Left ventricle myocardium superior (tissue), 1 donor: ENCODE measurements at regions of chr20 and their contacts with region 1.

Region 1: DNA sequence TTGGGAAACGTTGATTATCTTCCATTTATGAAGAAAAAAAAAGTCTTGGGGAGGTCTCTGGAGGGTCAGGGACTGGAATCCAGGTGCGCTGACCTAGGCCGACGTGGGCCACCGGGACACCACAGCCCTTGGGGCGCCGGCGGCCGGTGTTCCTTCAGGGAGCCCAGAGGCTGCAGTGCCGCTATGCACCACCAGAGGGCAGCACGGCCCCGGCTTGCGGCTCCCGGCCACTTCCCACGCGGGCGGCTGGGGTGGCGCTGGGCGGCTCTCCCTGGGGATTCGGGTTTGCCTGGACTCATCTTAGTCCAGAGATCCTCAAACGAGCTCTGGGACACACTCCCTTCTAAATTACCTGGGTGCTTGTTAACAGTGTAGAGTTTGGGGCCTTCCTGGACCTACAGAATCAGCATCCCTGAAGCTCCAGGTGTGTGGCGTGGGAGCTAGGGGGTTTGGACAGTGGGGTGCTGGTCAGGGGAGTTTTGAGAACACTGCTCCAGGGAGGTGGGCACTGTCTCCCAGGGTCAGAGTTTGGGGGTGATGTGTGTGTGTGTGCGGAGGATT is 23.0 kb upstream of the GTSF1L start:
- DNase-seq: peak; percentile 87
- ATAC-seq: peak; percentile 90

Region 2: DNA sequence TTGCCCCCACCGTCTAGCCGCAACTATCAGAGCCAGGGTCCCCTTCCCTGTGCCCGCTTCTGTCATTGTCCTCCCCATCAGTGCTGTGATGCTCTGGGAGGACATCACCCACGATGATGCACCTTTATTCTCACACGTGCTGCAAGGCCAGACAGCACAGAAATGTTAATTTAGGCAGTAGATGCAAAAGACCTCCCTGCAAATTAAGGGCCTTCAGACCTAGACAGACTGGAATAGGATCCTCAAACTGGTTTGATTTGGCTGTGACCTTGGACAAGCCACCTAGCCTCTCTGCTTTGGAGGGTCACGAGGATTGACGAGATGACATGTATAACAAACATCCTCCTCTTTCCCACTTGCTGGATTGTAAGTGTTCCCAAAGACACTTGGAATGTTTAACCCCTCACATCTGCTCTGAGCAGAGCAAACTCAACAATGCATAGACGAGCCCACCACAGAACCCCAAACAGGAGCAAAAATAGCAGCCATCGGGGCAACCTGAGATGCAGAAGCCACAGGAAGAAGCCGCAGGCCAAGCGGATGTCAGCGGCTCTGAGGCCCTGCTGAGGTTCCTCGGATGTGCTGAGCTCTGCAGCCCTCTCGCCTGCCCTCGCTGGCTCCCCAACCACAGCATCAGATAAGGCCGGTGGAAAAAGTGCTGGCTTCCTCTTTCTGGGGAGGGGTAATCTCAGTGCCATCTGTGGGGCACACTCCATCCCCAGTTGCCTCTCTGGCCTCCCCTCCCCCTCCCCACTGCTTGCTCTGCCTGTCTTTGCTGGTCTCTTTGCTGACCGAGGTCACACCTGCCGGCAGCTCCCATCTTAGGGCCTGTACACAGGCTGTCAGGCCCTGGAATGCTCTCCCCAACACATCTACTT is 200.2 kb after region 1 on chr20:
- intact Hi-C with region 1: no loop called
- DNase-seq: peak; percentile 54
- ATAC-seq: peak; percentile 53

Region 3: DNA sequence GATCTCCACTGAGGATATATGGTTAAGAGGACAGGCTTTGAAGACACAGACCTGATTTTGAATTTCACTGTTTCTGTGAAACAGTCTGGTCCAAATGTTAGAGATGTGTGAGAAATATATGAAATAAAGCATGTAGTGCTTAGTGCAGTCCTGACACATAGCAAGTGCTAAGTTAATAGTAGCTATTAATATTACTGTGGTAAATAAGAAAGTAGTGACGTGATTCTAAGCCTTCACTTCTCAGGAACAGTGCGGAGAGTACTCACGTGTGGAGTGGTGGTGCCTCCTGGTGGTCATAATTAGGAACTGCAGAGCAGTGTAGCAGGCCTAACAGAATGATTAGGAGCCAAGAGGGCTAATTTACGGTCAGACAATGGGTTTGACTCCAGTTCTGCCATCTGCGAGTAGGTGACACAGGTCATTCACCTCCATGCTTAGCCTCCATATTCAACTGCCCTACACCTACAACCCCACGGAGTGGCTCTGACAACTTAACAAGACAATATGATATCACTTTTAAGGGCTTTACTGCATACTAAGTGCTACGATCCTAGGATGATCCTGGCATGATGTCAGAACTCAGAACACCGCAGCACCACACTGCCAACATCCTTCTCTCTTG is 330.9 kb after region 1 on chr20:
- intact Hi-C with region 1: loop called (anchors 2 kb)
- DNase-seq: peak; percentile 67
- ATAC-seq: peak; percentile 78